Mammary epithelial cell (primary cell): ENCODE measurements at regions of chr1 and their contacts with region 1.

Region 1: GRCh38 chr1:63316984-63317816 is 5.2 kb upstream of the FOXD3 start:
- DNase-seq: peak; percentile 68
- H3K4me3 ChIP-seq: peak overlapping the region; percentile 51 to 59 (median 52)
- H3K27ac ChIP-seq: no peak overlapping the region
- H3K4me1 ChIP-seq: peaks cover 5% of the 10 kb centered on the region
- H3K27me3 ChIP-seq: peaks cover 39% of the 10 kb centered on the region
- CTCF ChIP-seq: peak; percentile 53 to 84

Region 2: DNA sequence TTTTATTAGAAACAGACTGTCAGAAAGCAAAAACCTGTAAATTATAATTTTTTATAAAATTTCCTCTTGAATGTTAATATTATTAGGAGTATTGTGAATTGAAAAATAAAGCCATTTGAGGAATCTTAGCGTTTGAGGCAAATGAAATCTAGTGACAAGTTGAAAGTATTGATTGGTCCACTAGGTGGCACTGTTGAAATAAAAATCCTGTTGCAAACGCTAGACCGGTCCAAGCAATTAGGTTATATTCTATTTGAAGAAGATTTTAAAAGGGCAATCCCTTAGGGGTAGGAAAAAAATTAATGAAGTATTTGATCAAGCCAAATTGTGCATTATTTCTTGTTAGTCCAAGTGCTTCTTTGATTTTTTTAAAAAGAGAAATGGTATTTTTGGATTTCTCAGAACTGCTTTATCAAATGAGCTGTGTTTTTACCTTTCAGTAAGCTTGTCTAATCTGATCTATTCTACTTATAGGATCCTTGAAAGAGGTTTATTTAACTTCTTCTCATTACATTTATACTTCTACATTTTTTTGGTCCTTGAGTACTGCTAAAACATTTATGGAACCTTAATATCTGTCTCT is 475.5 kb before region 1 on chr1:
- CTCF ChIA-PET with region 1: no interaction called
- dilution Hi-C with region 1: no loop called
- in situ Hi-C with region 1: no loop called
- intact Hi-C with region 1: loop called (anchors 5 kb)
- DNase-seq: peak; percentile 35
- H3K4me3 ChIP-seq: no peak overlapping the region
- H3K27ac ChIP-seq: no peak overlapping the region
- H3K4me1 ChIP-seq: no peaks in the 10 kb centered on the region
- H3K27me3 ChIP-seq: no peaks in the 10 kb centered on the region
- CTCF ChIP-seq: peak; percentile 56 to 58

Region 3: GRCh38 chr1:63367215-63368103 is 50.3 kb after region 1 on chr1 and contains the start of gene ALG6:
- CTCF ChIA-PET with region 1: no interaction called
- dilution Hi-C with region 1: no loop called
- in situ Hi-C with region 1: no loop called
- intact Hi-C with region 1: loop called (anchors 5 kb)
- DNase-seq: peak; percentile 92
- H3K4me3 ChIP-seq: peak within 1 kb of the TSS; percentile 72 to 98 (median 90)
- H3K27ac ChIP-seq: peak within 1 kb of the TSS; percentile 45
- H3K4me1 ChIP-seq: peaks cover 3% of the 10 kb centered on the region
- H3K27me3 ChIP-seq: no peaks in the 10 kb centered on the region
- CTCF ChIP-seq: peak in 1 of 2 donors; percentile 13
- total RNA-seq, gene ALG6: 8.2 to 11.3 TPM

Region 4: GRCh38 chr1:63522891-63523728 is 205.9 kb after region 1 on chr1 and contains the starts of genes EFCAB7 and ITGB3BP:
- CTCF ChIA-PET with region 1: no interaction called
- dilution Hi-C with region 1: no loop called
- in situ Hi-C with region 1: loop called in 1 of 2 experiments (anchors 25 kb)
- intact Hi-C with region 1: loop called (anchors 5 kb)
- DNase-seq: peak; percentile 98
- H3K4me3 ChIP-seq: peak within 1 kb of the TSS; percentile 59 to 93 (median 90)
- H3K27ac ChIP-seq: peak within 1 kb of the TSS; percentile 93
- H3K4me1 ChIP-seq: peaks cover 9% of the 10 kb centered on the region
- H3K27me3 ChIP-seq: no peaks in the 10 kb centered on the region
- CTCF ChIP-seq: no peak
- total RNA-seq, gene EFCAB7: 4.6 to 7.8 TPM
- total RNA-seq, gene ITGB3BP: 9.7 to 27.3 TPM

Region 5: GRCh38 chr1:63537940-63538339 is 220.7 kb after region 1 on chr1:
- CTCF ChIA-PET with region 1: no interaction called
- dilution Hi-C with region 1: no loop called
- in situ Hi-C with region 1: loop called in 1 of 2 experiments (anchors 25 kb)
- intact Hi-C with region 1: loop called (anchors 5 kb)
- DNase-seq: no peak
- H3K4me3 ChIP-seq: no peak overlapping the region
- H3K27ac ChIP-seq: no peak overlapping the region
- H3K4me1 ChIP-seq: no peaks in the 10 kb centered on the region
- H3K27me3 ChIP-seq: no peaks in the 10 kb centered on the region
- CTCF ChIP-seq: peak; percentile 43 to 49